ENCODE measurements at regions of chr13 and their contacts with region 1.

Region 1: GRCh38 chr13:105346141-105346775 is 1189.2 kb downstream of the EFNB2 start:
- DNase-seq: no peak
- H3K4me3 ChIP-seq: no peak overlapping the region
- H3K27ac ChIP-seq: no peak overlapping the region
- H3K4me1 ChIP-seq: no peaks in the 10 kb centered on the region
- H3K27me3 ChIP-seq: no peaks in the 10 kb centered on the region
- CTCF ChIP-seq: no peak
- POLR2A ChIP-seq: no peak

Region 2: DNA sequence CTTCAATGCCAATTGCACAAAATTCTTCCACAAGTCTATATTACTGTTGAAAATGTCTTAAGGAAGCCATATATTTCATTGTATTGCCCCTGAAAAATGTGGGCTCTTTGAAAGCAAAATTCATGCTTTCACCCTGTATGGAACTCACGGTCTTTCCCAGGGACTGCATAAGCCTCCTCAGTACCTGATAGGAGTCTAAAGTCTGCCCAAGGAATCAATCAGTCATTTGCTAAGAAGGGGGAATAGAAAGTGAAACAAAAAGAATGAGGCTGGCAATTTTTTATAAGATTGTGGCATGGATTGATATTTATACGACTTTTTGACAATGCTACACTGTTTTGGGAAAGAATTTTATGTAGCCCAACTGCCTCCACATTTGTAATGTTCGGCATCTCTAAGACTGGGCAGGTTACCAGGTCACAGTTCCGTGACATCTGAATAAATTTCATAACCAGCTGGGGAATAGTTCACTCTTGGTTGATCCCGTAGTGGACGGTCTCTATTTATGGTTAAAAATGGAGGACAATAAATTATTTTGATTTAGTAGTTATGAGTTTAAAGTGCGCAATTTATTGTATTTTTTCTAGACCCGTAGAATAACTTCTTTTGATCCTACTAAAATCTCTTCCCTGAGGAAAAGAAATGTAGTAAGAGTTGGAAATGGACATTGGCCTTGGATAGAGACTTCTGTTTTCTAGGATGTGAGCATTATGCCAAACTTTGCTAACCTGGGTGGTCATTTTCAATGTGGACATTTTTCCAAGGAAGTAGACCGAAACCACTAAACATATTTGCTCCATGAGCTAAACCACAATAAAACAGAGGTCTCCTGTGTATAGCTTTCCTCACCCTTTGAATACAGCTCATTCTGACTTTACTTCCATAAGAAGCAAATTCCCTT is 396.2 kb before region 1 on chr13:
- intact Hi-C with region 1: no loop called
- DNase-seq: no peak
- H3K4me3 ChIP-seq: peak overlapping the region in 1 of 3 donors; percentile 45
- H3K27ac ChIP-seq: no peak overlapping the region
- H3K4me1 ChIP-seq: no peaks in the 10 kb centered on the region
- H3K27me3 ChIP-seq: no peaks in the 10 kb centered on the region
- CTCF ChIP-seq: no peak
- POLR2A ChIP-seq: no peak

Region 3: DNA sequence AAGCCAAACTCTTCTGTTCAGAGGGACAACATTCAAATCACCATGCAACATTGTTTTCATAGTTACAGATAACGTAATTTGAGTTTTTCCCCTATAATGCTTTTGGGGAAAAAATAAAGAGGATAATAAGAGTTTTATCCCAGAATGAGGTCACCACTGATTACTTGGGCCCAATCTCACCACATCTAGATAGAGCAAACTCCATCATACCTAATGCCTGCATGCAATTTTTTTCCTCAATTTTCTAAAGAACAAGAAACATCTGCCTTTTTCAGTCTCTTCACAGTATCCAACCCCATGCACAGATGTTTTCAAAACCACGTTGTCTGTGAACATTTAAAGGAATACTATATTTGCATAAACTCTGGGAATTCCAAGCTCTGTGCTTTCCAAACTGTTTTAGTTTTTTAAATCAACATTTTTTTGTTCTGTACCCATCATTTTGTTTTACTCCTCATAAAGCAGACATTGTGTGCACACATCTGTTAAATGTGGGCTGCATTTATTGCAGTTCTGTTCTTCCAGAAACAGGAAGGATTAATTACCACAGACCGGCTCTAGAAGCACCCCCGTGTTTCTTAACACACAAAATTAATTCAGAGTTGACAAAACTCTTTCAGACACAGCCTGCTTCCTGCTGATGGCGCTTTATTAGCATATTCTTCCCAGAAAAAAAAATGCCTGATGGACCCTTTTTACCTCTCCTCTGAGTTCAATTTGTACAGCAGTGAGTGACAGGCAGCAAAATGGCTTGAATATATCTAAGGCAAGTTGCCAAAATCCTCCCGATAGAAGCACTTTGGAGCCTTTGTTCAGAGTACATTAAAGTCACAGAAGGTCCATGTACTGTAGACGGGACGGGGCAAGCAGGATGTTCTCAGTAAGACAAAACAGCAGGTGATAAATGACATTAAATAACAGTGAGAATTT is 17.3 kb after region 1 on chr13:
- intact Hi-C with region 1: no loop called
- DNase-seq: no peak
- H3K4me3 ChIP-seq: no peak overlapping the region
- H3K27ac ChIP-seq: no peak overlapping the region
- H3K4me1 ChIP-seq: no peaks in the 10 kb centered on the region
- H3K27me3 ChIP-seq: no peaks in the 10 kb centered on the region
- CTCF ChIP-seq: no peak
- POLR2A ChIP-seq: no peak

Region 4: DNA sequence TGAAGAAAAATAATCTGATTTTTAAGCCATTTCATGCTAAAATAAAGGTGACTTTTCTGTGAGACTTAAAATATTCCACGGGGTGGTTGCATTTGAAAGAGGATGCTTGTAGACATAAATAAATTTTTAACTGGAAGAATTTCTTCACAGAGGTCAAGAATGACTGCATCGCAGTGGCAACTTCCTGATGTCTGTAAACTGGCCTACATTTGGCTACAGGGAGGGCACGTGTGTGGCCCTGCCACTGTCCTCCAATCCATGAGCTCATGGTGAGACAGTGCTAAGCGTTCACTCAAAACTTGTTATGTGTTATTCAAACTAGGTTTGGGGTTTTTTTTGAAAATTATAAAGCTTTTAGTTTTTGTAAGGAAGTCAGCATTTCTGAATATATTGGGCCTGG is 99.9 kb after region 1 on chr13:
- intact Hi-C with region 1: loop called (anchors 5 kb)
- DNase-seq: no peak
- H3K4me3 ChIP-seq: no peak overlapping the region
- H3K27ac ChIP-seq: no peak overlapping the region
- H3K4me1 ChIP-seq: no peaks in the 10 kb centered on the region
- H3K27me3 ChIP-seq: no peaks in the 10 kb centered on the region
- CTCF ChIP-seq: no peak
- POLR2A ChIP-seq: no peak

Region 5: DNA sequence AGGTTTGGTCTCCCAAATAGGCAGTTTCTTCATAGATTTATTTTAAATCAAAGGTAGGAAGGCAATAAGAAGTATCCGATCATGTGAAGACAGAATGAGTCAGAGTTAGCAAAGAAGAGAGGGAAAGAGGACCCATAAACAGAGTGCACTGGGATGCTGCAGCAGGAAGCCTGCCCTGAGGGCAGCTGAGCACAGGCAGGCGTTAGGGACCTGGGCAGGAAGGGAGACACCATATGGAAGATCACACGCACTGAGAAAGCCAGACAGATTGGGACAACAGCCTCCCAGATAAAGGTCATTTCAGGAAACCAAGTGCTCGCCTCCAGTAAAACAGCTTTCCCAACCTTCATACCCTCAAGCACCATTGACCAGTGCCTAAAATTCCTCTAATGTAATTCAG is 591.2 kb after region 1 on chr13:
- intact Hi-C with region 1: no loop called
- DNase-seq: no peak
- H3K4me3 ChIP-seq: no peak overlapping the region
- H3K27ac ChIP-seq: no peak overlapping the region
- H3K4me1 ChIP-seq: no peaks in the 10 kb centered on the region
- H3K27me3 ChIP-seq: no peaks in the 10 kb centered on the region
- CTCF ChIP-seq: no peak
- POLR2A ChIP-seq: no peak

Region 6: GRCh38 chr13:106660746-106661625 is 1314.7 kb after region 1 on chr13:
- intact Hi-C with region 1: no loop called
- DNase-seq: no peak
- H3K4me3 ChIP-seq: no peak overlapping the region
- H3K27ac ChIP-seq: no peak overlapping the region
- H3K4me1 ChIP-seq: no peaks in the 10 kb centered on the region
- H3K27me3 ChIP-seq: no peaks in the 10 kb centered on the region
- CTCF ChIP-seq: no peak
- POLR2A ChIP-seq: no peak